ENCODE measurements at regions of chr18 and their contacts with region 1.

Region 1: GRCh38 chr18:21955757-21956652 is 213.4 kb upstream of the GATA6 start:
- DNase-seq: peak; percentile 87
- ATAC-seq: peak; percentile 95
- H3K4me3 Mint-ChIP-seq: no peak overlapping the region
- H3K27ac Mint-ChIP-seq: no peak overlapping the region
- H3K4me1 Mint-ChIP-seq: no peaks in the 10 kb centered on the region
- H3K27me3 Mint-ChIP-seq: peaks cover 10% of the 10 kb centered on the region
- CTCF ChIP-seq: peak; percentile 90

Region 2: GRCh38 chr18:21914739-21915319 is 41.2 kb before region 1 on chr18:
- CTCF ChIA-PET with region 1: interaction called, 10 read pairs
- POLR2A ChIA-PET with region 1: no interaction called
- DNase-seq: peak; percentile 44
- ATAC-seq: peak; percentile 86
- H3K4me3 Mint-ChIP-seq: no peak overlapping the region
- H3K27ac Mint-ChIP-seq: no peak overlapping the region
- H3K4me1 Mint-ChIP-seq: 0 out of 2 replicates have a peak, but pooled peaks cover 5% of the 10 kb centered on the region
- H3K27me3 Mint-ChIP-seq: peaks cover 51% of the 10 kb centered on the region
- CTCF ChIP-seq: peak; percentile 63